Sciatic nerve (tissue), 2 donors: ENCODE measurements at regions of chr20 and their contacts with region 1.

Region 1: DNA sequence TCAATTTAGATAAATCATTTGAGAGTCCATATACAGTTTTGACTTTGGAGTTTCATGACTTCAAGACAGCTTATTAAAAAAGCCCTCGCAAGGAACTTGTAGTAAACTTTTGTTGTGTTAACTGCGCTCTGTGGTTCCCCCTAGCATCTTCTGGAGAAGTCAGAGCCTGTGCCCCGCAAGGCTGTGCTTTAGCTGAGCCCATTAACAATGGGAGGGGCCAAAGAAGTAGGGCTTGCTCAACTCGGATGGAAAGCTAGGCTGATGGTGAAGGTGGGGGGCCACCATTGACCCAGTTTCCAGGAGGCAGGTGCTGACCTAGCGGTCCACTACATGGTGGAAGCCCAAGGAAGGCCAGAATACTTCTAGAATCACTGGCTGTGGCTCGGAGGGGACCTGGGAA is 29.3 kb upstream of the OVOL2 start:
- DNase-seq: no peak
- ATAC-seq: no peak

Region 2: DNA sequence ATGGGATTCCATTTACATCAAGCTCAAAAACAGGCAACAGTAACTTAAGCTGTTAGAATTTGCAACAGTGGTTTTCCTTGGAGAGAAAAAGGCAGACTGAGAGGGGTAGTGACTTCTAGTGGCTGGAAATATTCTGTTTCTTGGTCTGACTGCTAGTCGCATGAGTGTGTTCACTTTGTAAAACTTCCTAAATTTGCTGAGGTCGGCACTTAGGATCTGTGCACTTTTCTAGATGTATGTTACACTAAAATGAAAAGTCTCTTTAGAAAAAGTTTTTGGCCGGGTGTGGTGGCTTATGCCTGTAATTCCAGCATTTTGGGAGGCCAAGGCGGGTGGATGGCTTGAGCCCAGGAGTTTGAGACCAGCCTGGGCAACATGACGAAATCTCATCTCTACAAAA is 48.0 kb before region 1 on chr20:
- intact Hi-C with region 1: loop called (anchors 1 kb)
- DNase-seq: no peak
- ATAC-seq: no peak

Region 3: GRCh38 chr20:18154342-18154741 is 67.3 kb after region 1 on chr20:
- intact Hi-C with region 1: no loop called
- DNase-seq: no peak
- ATAC-seq: no peak

Region 4: GRCh38 chr20:18287915-18288748 is 201.1 kb after region 1 on chr20 and contains the start of gene ZNF133:
- intact Hi-C with region 1: no loop called
- DNase-seq: peak; percentile 98
- ATAC-seq: peak; percentile 99
- total RNA-seq, gene ZNF133: 16.7 TPM

Region 5: GRCh38 chr20:18314786-18315406 is 227.8 kb after region 1 on chr20:
- intact Hi-C with region 1: no loop called
- DNase-seq: no peak
- ATAC-seq: no peak

Region 6: GRCh38 chr20:20017001-20017843 is 1930.2 kb after region 1 on chr20 and contains the start of gene NAA20:
- intact Hi-C with region 1: no loop called
- DNase-seq: peak; percentile 96
- ATAC-seq: peak; percentile 100
- total RNA-seq, gene NAA20: 38.1 TPM